Posterior vena cava (tissue), 2 donors: ENCODE measurements at regions of chr17 and their contacts with region 1.

Region 1: GRCh38 chr17:7818746-7819645 is 15.0 kb upstream of the KDM6B start:
- DNase-seq: no peak

Region 2: GRCh38 chr17:7903154-7904103 is 84.4 kb after region 1 on chr17:
- intact Hi-C with region 1: loop called in 1 of 2 experiments (anchors 1 kb)
- DNase-seq: no peak